Cardiac septum (tissue), 1 donor: ENCODE measurements at regions of chr5 and their contacts with region 1.

Region 1: GRCh38 chr5:73902327-73903051 is 276.5 kb downstream of the ARHGEF28 start:
- DNase-seq: no peak

Region 2: DNA sequence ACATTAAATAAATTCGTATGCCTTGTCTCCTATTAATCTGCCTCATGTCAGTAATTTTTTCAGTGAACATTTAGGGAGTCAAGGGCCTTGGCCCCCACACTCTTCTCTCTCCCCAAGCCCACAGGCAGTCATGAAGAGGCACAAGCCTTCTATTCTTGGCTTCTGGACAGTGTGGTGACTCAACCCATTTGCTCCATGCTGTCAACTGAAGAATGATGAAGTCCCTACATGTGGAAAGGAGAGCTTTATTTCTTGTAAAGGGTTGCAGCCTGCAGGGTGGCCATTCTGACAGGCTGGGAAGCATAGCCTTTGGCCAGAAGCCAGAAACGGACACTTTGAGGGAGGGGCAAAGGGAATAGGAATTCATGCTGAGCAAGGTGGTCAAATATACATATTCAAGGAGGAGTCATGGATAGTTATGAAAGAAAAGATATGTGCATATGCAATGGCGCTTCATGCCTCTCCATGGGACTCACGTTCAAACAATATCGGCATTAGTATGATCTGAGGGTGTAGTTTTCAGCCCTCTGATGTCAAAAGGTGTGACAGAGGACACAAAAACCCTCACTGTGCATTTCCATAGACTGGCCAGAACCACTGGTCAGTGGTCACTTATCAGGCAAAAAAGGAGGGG is 368.4 kb before region 1 on chr5:
- intact Hi-C with region 1: no loop called
- DNase-seq: no peak

Region 3: GRCh38 chr5:74035521-74035981 is 133.1 kb after region 1 on chr5:
- intact Hi-C with region 1: loop called (anchors 10 kb)
- DNase-seq: no peak

Region 4: DNA sequence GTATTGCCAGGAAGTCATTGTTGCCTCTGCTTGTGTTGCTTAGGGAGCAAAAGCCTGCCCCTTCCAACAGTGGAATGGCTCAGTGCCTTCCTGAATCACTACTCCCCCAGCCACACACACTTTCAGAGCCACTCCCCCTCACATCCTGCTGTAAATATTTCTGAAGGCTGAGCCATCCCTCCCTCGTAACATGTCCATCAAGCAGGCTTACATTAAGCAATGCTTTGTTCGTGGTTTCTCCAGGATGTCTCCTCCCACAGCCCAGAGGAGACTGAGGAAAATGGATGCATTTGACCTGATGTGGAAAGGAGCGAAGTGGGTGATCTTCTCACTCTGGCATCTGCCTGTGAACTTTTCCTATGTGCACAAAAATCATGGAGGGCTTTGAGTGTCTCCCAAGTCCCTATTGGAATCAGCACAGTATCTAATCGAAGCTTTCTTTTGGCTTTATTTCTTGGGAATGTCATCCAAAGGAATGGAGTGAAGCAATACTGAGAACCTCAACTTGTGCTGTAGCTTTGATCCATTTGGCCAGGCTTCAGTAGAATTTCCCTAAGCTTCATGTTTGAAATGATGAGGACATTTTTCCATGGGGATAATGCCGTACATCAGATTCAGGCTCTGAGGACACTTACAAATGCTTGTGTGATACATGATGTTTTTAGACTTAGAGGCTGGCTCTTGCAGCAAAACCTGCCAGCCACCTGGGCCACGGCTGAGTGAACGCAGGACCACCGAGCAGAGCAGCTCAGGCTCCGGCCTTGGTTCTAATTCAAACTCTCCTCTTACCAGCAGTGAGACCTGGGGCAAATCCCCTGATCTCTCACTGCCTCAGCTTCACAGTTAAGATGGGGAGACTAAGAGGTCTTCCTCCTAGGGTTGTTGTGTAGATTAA is 348.9 kb after region 1 on chr5:
- intact Hi-C with region 1: loop called (anchors 10 kb)
- DNase-seq: no peak

Region 5: DNA sequence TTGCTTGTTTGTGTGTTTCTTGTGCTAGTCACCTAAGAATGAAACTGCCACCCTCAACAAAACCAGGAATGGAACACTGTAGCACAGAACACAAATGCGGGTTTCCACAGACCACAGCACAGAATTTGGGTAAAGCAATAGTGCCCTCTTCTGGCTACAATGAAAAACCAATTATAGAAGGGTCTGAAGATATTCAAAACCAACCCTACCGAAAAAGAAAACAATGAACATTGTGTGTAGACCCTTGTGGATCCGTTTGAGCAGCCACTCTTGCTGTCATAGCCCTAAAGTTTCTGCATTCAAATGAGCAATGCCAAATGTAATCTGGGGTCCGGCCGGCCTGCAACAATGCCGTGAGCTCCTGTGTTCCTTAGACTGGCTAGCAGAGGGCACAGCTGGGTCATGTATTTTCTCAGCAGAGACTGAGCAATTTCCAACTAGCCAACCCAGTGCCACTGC is 746.4 kb after region 1 on chr5:
- intact Hi-C with region 1: loop called (anchors 1 kb)
- DNase-seq: no peak

Region 6: DNA sequence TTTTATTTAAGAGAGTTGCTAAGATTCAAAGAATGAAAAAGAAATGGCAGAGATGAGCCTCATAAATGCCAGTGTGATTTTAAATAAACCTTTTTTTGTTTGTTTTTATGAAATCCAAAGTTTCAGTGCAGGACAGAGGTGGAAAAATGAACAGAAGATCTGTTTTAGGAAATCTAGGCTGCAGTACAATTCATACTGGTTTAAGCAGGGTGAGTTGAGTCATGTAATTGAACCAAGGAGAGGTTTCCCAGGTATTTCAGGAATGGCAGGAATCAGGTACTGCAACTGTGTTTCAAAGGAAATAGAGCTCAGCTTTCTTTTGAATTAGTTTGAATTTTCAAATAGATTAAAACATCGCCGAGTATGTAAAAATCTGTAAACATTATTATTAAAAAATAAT is 1337.2 kb after region 1 on chr5:
- intact Hi-C with region 1: no loop called
- DNase-seq: no peak